CD14-positive monocyte (primary cell): ENCODE measurements at regions of chr17 and their contacts with region 1.

Region 1: DNA sequence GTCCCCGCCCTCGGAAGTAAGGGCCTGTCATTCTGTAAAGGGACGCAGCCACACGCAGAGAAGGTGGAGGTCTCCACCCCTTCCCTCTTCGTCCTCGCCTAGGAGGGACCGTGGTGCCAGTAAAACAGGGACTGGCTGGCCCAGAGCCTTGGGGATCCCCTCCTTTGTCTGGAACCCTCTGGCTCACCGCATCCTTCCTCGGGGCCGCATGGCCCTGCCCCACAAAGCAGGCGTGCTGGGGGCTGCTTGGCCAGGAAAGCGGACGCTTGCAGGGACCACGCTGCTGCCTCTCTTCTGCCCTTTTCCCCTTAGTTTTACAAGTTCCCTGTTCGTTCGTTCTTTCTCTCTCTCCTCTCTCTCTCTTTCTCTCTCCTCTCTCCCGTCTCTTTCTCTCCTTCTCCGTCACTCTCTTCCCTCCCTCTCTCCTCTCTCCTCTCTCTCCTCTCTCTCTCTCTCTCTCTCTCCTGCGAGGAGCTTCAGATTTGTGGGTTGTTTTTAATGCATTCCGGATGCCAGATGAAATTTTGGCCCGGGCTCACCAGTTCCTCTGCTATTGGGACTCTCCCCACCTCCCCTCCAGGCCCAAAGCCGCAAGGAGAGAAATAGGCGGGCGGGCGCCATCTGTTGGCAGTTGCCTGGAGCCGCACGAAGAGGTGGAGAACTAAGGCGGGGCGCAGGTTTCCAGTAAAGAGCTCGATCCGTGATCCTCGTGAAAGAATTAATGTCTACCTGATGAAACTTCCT is 35.1 kb upstream of the CDRT4 start:
- DNase-seq: peak; percentile 64 to 75 (median 71)
- H3K4me3 ChIP-seq: peak overlapping the region; percentile 1 to 70 (median 29)
- H3K4me3 Mint-ChIP-seq: peak overlapping the region; percentile 67 to 94
- H3K27ac ChIP-seq: no peak overlapping the region
- H3K27ac Mint-ChIP-seq: peak overlapping the region in 6 of 7 donors; percentile 23 to 95 (median 90)
- H3K4me1 ChIP-seq: peaks cover 11 to 12% of the 10 kb centered on the region in 2 donors
- H3K4me1 Mint-ChIP-seq: peaks cover 8% of the 10 kb centered on the region
- H3K27me3 ChIP-seq: no peaks in the 10 kb centered on the region
- H3K27me3 Mint-ChIP-seq: peaks cover 0 to 7% (median 0%) of the 10 kb centered on the region in 3 donors
- CTCF ChIP-seq: peak; percentile 81

Region 2: GRCh38 chr17:15260376-15261257 is 241.9 kb before region 1 on chr17:
- intact Hi-C with region 1: loop called (anchors 1 to 5 kb)
- DNase-seq: peak; percentile 50 to 71 (median 65)
- H3K4me3 ChIP-seq: peak overlapping the region; percentile 43 to 78 (median 50)
- H3K4me3 Mint-ChIP-seq: peak overlapping the region; percentile 93 to 98
- H3K27ac ChIP-seq: no peak overlapping the region
- H3K27ac Mint-ChIP-seq: peak overlapping the region; percentile 47 to 84 (median 79)
- H3K4me1 ChIP-seq: peaks cover 43% of the 10 kb centered on the region in 2 donors
- H3K4me1 Mint-ChIP-seq: peaks cover 48% of the 10 kb centered on the region
- H3K27me3 ChIP-seq: peaks cover 37 to 58% of the 10 kb centered on the region in 2 donors
- H3K27me3 Mint-ChIP-seq: peaks cover 64 to 79% (median 71%) of the 10 kb centered on the region in 3 donors
- CTCF ChIP-seq: peak; percentile 83